CD4-positive, alpha-beta T cell (primary cell): ENCODE measurements at regions of chr22 and their contacts with region 1.

Region 1: GRCh38 chr22:46057762-46058420 is 80.9 kb upstream of the WNT7B start:
- DNase-seq: peak in 6 of 14 experiments; percentile 17 to 80 (median 54)
- ATAC-seq: peak; percentile 69
- H3K4me3 ChIP-seq: no peak overlapping the region
- H3K4me3 Mint-ChIP-seq: peak overlapping the region; percentile 82
- H3K27ac ChIP-seq: peak overlapping the region in 1 of 2 donors; percentile 24
- H3K27ac Mint-ChIP-seq: peak overlapping the region; percentile 92
- H3K4me1 ChIP-seq: peaks cover 52% of the 10 kb centered on the region
- H3K4me1 Mint-ChIP-seq: peaks cover 42% of the 10 kb centered on the region
- H3K27me3 ChIP-seq: no peaks in the 10 kb centered on the region
- H3K27me3 Mint-ChIP-seq: no peaks in the 10 kb centered on the region
- CTCF ChIP-seq: no peak

Region 2: GRCh38 chr22:45240810-45241631 is 816.9 kb before region 1 on chr22 and contains the start of gene KIAA0930:
- CTCF ChIA-PET with region 1: no interaction called
- POLR2A ChIA-PET with region 1: no interaction called
- intact Hi-C with region 1: loop called in 1 of 2 experiments (anchors 10 kb)
- DNase-seq: peak; percentile 70 to 89 (median 76)
- ATAC-seq: peak; percentile 62
- H3K4me3 ChIP-seq: peak within 1 kb of the TSS; percentile 72
- H3K4me3 Mint-ChIP-seq: peak within 1 kb of the TSS; percentile 94
- H3K27ac ChIP-seq: peak within 1 kb of the TSS; percentile 32 to 52
- H3K27ac Mint-ChIP-seq: peak within 1 kb of the TSS; percentile 90
- H3K4me1 ChIP-seq: peaks cover 39% of the 10 kb centered on the region
- H3K4me1 Mint-ChIP-seq: peaks cover 19% of the 10 kb centered on the region
- H3K27me3 ChIP-seq: no peaks in the 10 kb centered on the region
- H3K27me3 Mint-ChIP-seq: no peaks in the 10 kb centered on the region
- CTCF ChIP-seq: no peak
- total RNA-seq, gene KIAA0930: 6.7 to 7.4 TPM

Region 3: DNA sequence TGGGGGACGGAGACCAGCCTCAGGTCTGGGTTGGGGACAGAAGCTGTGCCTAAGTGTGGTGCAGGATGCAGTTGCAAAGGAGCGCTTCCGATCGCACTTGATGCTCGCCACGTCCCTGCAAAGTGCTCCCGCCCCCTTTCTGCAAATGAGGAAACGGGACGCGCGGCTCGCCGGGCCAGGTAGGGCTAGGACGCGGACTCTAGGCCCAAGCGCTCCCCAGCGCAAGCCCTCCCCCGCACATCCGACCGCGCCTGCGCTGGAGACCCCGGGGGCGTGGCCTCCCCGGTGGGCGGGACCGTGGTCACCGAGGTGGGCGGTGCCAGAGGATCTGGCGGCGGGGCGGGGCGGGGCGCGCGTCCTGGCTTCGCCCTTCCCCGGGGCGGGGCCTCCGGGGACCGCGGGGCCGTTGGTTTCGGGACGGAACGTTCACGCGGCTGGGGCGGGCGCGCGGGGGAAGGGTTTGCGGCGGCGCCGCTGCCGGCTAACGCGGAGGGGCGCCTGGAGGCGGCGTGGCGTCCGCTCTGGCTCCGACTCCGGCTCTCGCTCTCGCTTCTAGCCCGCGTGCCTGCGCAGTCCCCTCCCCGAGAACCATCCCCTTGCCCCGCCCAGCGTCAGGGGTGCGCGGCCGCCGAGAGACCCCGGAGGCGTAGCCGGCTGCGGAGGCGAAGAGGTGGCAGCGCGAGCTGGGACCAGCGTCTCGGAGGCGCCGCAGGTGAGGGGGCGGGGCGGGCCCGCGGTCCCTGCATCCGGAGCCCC is 748.2 kb before region 1 on chr22 and contains the start of gene FAM118A:
- CTCF ChIA-PET with region 1: no interaction called
- POLR2A ChIA-PET with region 1: no interaction called
- intact Hi-C with region 1: loop called in 1 of 2 experiments (anchors 10 kb)
- DNase-seq: peak; percentile 91 to 99 (median 96)
- ATAC-seq: peak; percentile 84
- H3K4me3 ChIP-seq: peak within 1 kb of the TSS; percentile 93
- H3K4me3 Mint-ChIP-seq: peak within 1 kb of the TSS; percentile 85
- H3K27ac ChIP-seq: peak within 1 kb of the TSS; percentile 77 to 87
- H3K27ac Mint-ChIP-seq: peak within 1 kb of the TSS; percentile 95
- H3K4me1 ChIP-seq: peaks cover 55% of the 10 kb centered on the region
- H3K4me1 Mint-ChIP-seq: peaks cover 49% of the 10 kb centered on the region
- H3K27me3 ChIP-seq: no peaks in the 10 kb centered on the region
- H3K27me3 Mint-ChIP-seq: no peaks in the 10 kb centered on the region
- CTCF ChIP-seq: no peak
- total RNA-seq, gene FAM118A: 159 to 161 TPM

Region 4: GRCh38 chr22:46013460-46014416 is 44.2 kb before region 1 on chr22:
- CTCF ChIA-PET with region 1: no interaction called
- POLR2A ChIA-PET with region 1: interaction called, 17 read pairs
- intact Hi-C with region 1: no loop called
- DNase-seq: peak; percentile 66 to 94 (median 84)
- ATAC-seq: peak; percentile 83
- H3K4me3 ChIP-seq: peak overlapping the region; percentile 94
- H3K4me3 Mint-ChIP-seq: peak overlapping the region; percentile 89
- H3K27ac ChIP-seq: peak overlapping the region; percentile 58 to 87
- H3K27ac Mint-ChIP-seq: peak overlapping the region; percentile 86
- H3K4me1 ChIP-seq: peaks cover 20% of the 10 kb centered on the region
- H3K4me1 Mint-ChIP-seq: peaks cover 12% of the 10 kb centered on the region
- H3K27me3 ChIP-seq: peaks cover 0 to 2% of the 10 kb centered on the region in 2 experiments
- H3K27me3 Mint-ChIP-seq: no peaks in the 10 kb centered on the region
- CTCF ChIP-seq: peak; percentile 77

Region 5: DNA sequence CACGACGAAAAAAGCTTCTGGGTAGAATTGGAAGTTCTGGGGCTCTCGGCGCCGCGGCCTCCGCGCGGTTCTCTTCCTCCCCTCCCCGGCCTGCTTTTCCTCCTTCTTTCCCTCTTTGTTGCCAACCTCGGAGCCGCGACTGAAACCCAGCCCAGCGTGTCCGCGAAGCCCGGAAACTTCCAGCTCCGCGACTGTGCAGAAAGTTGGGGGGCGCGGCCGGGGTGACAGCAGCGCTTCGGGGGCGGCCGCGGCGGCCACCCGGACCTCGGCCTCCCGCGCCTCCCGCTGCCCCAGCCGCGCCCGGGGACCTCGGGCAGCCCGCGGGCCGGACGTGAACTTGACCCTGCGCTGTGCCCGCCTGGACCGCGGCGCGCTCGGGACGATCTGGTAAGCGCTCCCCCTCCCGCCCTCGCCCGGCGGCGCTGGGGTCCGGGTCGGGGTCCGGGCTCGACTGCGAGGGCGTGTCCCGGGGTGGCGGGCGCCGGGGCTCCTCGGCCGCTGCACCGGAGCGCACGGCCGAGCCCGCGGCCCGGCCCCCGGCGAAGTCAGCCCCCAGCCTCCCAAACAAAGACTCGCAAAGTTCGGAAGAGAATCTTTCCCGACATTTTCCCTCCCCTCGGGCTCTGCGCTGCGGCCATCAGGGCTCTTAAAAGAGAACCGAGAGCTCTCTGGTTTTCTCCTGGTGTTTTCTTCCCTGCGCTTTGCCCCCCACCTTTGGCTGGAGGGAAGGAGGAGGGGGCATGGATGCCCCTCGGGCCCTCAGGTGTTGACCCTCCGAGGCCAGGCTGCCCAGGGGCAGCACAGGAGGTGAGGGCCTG is 13.1 kb before region 1 on chr22:
- CTCF ChIA-PET with region 1: no interaction called
- POLR2A ChIA-PET with region 1: interaction called, 47 read pairs
- intact Hi-C with region 1: no loop called
- DNase-seq: peak in 10 of 14 experiments; percentile 21 to 60 (median 42)
- ATAC-seq: peak; percentile 59
- H3K4me3 ChIP-seq: peak overlapping the region; percentile 52
- H3K4me3 Mint-ChIP-seq: peak overlapping the region; percentile 92
- H3K27ac ChIP-seq: peak overlapping the region; percentile 48 to 55
- H3K27ac Mint-ChIP-seq: peak overlapping the region; percentile 90
- H3K4me1 ChIP-seq: peaks cover 41% of the 10 kb centered on the region
- H3K4me1 Mint-ChIP-seq: peaks cover 34% of the 10 kb centered on the region
- H3K27me3 ChIP-seq: no peaks in the 10 kb centered on the region
- H3K27me3 Mint-ChIP-seq: no peaks in the 10 kb centered on the region
- CTCF ChIP-seq: no peak

Region 6: DNA sequence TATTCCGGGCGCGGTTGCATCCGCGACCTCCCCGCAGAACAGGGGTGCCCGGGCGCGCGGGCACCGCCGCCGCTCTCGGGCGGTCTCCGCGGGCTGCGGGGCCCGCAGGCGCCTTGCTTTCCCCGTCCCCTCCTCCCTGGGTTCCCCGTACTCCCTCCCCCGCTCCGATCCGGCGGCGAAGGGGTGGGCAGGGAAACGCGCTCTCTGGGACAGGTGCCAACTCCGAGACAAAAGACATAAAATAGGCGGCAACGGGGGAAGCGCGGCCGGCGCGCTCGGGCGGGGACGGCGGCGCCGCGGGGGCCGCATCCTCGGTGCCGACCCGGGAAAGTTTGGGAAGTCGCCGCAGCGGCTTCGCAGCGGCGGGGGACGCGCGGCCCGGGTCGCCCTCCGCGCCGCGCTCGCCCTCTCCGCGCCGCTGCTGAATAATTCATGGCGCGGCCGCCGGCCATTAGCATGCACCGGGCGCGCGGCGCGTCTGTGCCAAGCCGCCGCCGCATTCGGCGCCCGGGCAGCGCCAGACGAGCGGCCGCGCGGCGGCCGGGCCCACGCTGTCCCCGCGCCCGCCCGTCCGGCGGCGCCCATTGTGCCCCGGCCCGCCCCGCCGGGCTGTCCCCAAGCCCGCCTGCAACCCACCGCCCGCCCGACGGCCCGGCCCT is 13.7 kb after region 1 on chr22:
- CTCF ChIA-PET with region 1: interaction called, 6 read pairs
- POLR2A ChIA-PET with region 1: interaction called, 26 read pairs
- intact Hi-C with region 1: loop called in 1 of 2 experiments (anchors 1 kb)
- DNase-seq: peak; percentile 45 to 80 (median 60)
- ATAC-seq: peak; percentile 28
- H3K4me3 ChIP-seq: peak overlapping the region; percentile 38
- H3K4me3 Mint-ChIP-seq: peak overlapping the region; percentile 90
- H3K27ac ChIP-seq: peak overlapping the region in 1 of 2 donors; percentile 46
- H3K27ac Mint-ChIP-seq: peak overlapping the region; percentile 78
- H3K4me1 ChIP-seq: peaks cover 56% of the 10 kb centered on the region
- H3K4me1 Mint-ChIP-seq: peaks cover 55% of the 10 kb centered on the region
- H3K27me3 ChIP-seq: peaks cover 0 to 10% of the 10 kb centered on the region in 2 experiments
- H3K27me3 Mint-ChIP-seq: no peaks in the 10 kb centered on the region
- CTCF ChIP-seq: no peak

Region 7: DNA sequence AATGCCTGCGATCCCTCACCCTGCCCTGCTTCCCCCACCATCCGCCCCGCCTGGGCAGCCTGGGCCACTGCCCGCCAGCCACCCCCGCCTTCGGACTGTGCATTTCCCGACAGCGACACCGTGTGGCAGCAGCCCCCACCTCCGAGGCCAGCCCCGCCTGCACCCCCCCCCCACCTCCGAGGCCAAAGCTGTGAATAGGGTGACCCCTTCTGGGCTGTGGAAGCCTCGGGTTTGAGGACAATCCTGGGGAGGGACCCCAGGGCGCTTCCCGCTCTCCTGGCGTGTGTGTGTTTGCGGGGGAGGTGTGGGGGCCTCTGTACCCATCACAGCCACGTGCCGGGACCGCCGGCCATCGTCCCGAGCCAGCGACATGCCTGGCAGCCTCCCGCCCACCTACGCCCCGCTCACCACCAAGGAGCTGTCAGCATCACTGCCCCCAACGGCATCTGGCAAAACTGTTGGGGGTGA is 58.6 kb after region 1 on chr22:
- CTCF ChIA-PET with region 1: interaction called, 5 read pairs
- POLR2A ChIA-PET with region 1: no interaction called
- intact Hi-C with region 1: loop called in 1 of 2 experiments (anchors 5 kb)
- DNase-seq: peak; percentile 76 to 92 (median 85)
- ATAC-seq: peak; percentile 97
- H3K4me3 ChIP-seq: no peak overlapping the region
- H3K4me3 Mint-ChIP-seq: no peak overlapping the region
- H3K27ac ChIP-seq: no peak overlapping the region
- H3K27ac Mint-ChIP-seq: no peak overlapping the region
- H3K4me1 ChIP-seq: peaks cover 11% of the 10 kb centered on the region
- H3K4me1 Mint-ChIP-seq: no peaks in the 10 kb centered on the region
- H3K27me3 ChIP-seq: no peaks in the 10 kb centered on the region
- H3K27me3 Mint-ChIP-seq: no peaks in the 10 kb centered on the region
- CTCF ChIP-seq: peak; percentile 80

Region 8: DNA sequence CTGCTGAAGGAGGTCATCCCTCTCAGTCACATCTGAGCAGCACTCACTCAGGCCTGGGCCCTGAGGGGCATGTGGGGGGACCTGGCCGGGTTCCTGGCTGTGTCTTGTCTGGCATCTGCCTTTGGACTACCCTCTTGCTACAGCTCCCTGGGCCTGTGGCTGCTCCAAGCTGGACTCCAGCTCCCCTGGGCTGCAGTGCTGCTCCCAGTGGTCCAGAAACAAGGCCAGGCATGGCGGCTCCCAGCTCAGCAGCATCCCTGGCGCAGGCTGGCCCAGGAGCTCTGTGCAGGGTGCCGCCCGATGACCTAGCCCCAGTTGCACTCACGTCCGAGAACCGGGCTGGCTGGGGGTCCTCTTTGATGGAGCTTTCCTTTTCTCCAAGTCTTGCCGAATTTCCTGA is 186.9 kb after region 1 on chr22:
- CTCF ChIA-PET with region 1: no interaction called
- POLR2A ChIA-PET with region 1: no interaction called
- intact Hi-C with region 1: no loop called
- DNase-seq: no peak
- ATAC-seq: no peak
- H3K4me3 ChIP-seq: no peak overlapping the region
- H3K4me3 Mint-ChIP-seq: no peak overlapping the region
- H3K27ac ChIP-seq: no peak overlapping the region
- H3K27ac Mint-ChIP-seq: no peak overlapping the region
- H3K4me1 ChIP-seq: peaks cover 33% of the 10 kb centered on the region
- H3K4me1 Mint-ChIP-seq: peaks cover 19% of the 10 kb centered on the region
- H3K27me3 ChIP-seq: no peaks in the 10 kb centered on the region
- H3K27me3 Mint-ChIP-seq: no peaks in the 10 kb centered on the region
- CTCF ChIP-seq: no peak